IMR-90 (cell line): ENCODE measurements at regions of chr15 and their contacts with region 1.

Region 1: GRCh38 chr15:47717036-47717611 is at the start of gene SEMA6D:
- DNase-seq: peak; percentile 85
- ATAC-seq: peak; percentile 75
- H3K4me3 ChIP-seq: peak within 1 kb of the TSS; percentile 95
- H3K27ac ChIP-seq: peak within 1 kb of the TSS; percentile 84
- H3K4me1 ChIP-seq: peaks cover 4% of the 10 kb centered on the region
- H3K27me3 ChIP-seq: no peaks in the 10 kb centered on the region
- CTCF ChIP-seq: peak; percentile 51
- POLR2A ChIP-seq: no peak
- RAD21 ChIP-seq: peak; percentile 48
- total RNA-seq, gene SEMA6D: 17.4 and 18.3 TPM in 2 replicates

Region 2: GRCh38 chr15:47293466-47294162 is 423.5 kb before region 1 on chr15:
- CTCF ChIA-PET with region 1: no interaction called
- POLR2A ChIA-PET with region 1: no interaction called
- dilution Hi-C with region 1: no loop called
- in situ Hi-C with region 1: no loop called
- intact Hi-C with region 1: loop called (anchors 5 kb)
- DNase-seq: peak; percentile 95
- ATAC-seq: peak; percentile 93
- H3K4me3 ChIP-seq: no peak overlapping the region
- H3K27ac ChIP-seq: peak overlapping the region; percentile 48; the same call in 1 of the 2 replicates
- H3K4me1 ChIP-seq: peaks cover 6% of the 10 kb centered on the region
- H3K27me3 ChIP-seq: no peaks in the 10 kb centered on the region
- CTCF ChIP-seq: no peak
- POLR2A ChIP-seq: no peak
- RAD21 ChIP-seq: no peak

Region 3: DNA sequence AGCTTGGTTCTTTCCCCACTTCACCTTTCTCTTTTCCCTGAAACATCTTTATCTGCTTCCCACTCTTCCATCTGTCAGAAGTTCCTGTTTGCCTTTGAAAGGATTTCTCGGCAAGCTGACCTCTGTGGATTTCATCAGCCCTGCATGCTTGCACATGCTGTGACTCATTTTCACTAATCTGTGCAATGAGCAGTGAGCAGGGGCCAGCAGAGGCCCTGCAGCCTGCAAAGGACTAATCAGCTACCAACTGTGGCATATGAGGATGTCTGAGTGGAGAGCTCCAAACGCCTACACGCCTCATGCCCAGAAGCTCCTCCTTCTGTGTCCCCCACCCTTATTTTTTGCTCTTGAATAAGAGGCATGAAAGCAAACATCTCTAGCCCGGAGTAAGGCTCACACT is 332.8 kb before region 1 on chr15:
- CTCF ChIA-PET with region 1: no interaction called
- POLR2A ChIA-PET with region 1: no interaction called
- dilution Hi-C with region 1: no loop called
- in situ Hi-C with region 1: no loop called
- intact Hi-C with region 1: loop called (anchors 5 kb)
- DNase-seq: peak; percentile 96
- ATAC-seq: peak; percentile 95
- H3K4me3 ChIP-seq: no peak overlapping the region
- H3K27ac ChIP-seq: no peak overlapping the region; the same call in 1 of the 2 replicates
- H3K4me1 ChIP-seq: peaks cover 11% of the 10 kb centered on the region
- H3K27me3 ChIP-seq: no peaks in the 10 kb centered on the region
- CTCF ChIP-seq: no peak
- POLR2A ChIP-seq: no peak
- RAD21 ChIP-seq: no peak; the same call in 1 of the 2 replicates

Region 4: GRCh38 chr15:47470983-47471382 is 246.1 kb before region 1 on chr15:
- CTCF ChIA-PET with region 1: interaction called, 3 read pairs
- POLR2A ChIA-PET with region 1: no interaction called
- dilution Hi-C with region 1: no loop called
- in situ Hi-C with region 1: no loop called
- intact Hi-C with region 1: loop called (anchors 1 kb)
- DNase-seq: peak; percentile 67
- ATAC-seq: peak; percentile 33
- H3K4me3 ChIP-seq: no peak overlapping the region
- H3K27ac ChIP-seq: no peak overlapping the region
- H3K4me1 ChIP-seq: peaks cover 3% of the 10 kb centered on the region
- H3K27me3 ChIP-seq: no peaks in the 10 kb centered on the region
- CTCF ChIP-seq: no peak
- POLR2A ChIP-seq: no peak
- RAD21 ChIP-seq: no peak

Region 5: GRCh38 chr15:47736143-47736786 is 19.1 kb after region 1 on chr15:
- CTCF ChIA-PET with region 1: no interaction called
- POLR2A ChIA-PET with region 1: no interaction called
- dilution Hi-C with region 1: no loop called
- in situ Hi-C with region 1: no loop called
- intact Hi-C with region 1: loop called (anchors 2 kb)
- DNase-seq: peak; percentile 41
- ATAC-seq: peak; percentile 77
- H3K4me3 ChIP-seq: no peak overlapping the region
- H3K27ac ChIP-seq: peak overlapping the region; percentile 52; the same call in 1 of the 2 replicates
- H3K4me1 ChIP-seq: peaks cover 6% of the 10 kb centered on the region
- H3K27me3 ChIP-seq: no peaks in the 10 kb centered on the region
- CTCF ChIP-seq: no peak
- POLR2A ChIP-seq: no peak
- RAD21 ChIP-seq: no peak

Region 6: GRCh38 chr15:47817969-47818548 is 100.9 kb after region 1 on chr15:
- CTCF ChIA-PET with region 1: no interaction called
- POLR2A ChIA-PET with region 1: no interaction called
- dilution Hi-C with region 1: no loop called
- in situ Hi-C with region 1: no loop called
- intact Hi-C with region 1: loop called (anchors 5 kb)
- DNase-seq: no peak
- ATAC-seq: no peak
- H3K4me3 ChIP-seq: no peak overlapping the region
- H3K27ac ChIP-seq: no peak overlapping the region
- H3K4me1 ChIP-seq: peaks cover 3% of the 10 kb centered on the region; the same call in 1 of the 2 replicates
- H3K27me3 ChIP-seq: peaks cover 17% of the 10 kb centered on the region
- CTCF ChIP-seq: no peak
- POLR2A ChIP-seq: no peak
- RAD21 ChIP-seq: no peak